Vagina (tissue), 2 donors: ENCODE measurements at regions of chr1 and their contacts with region 1.

Region 1: GRCh38 chr1:27402349-27402754 is 9.9 kb downstream of the GPR3 start:
- DNase-seq: no peak
- H3K4me3 ChIP-seq: no peak overlapping the region
- H3K27ac ChIP-seq: peak overlapping the region; percentile 87
- H3K4me1 ChIP-seq: peaks cover 81% of the 10 kb centered on the region
- H3K27me3 ChIP-seq: no peaks in the 10 kb centered on the region
- CTCF ChIP-seq: peak; percentile 38 to 63 (median 46)
- POLR2A ChIP-seq: no peak

Region 2: DNA sequence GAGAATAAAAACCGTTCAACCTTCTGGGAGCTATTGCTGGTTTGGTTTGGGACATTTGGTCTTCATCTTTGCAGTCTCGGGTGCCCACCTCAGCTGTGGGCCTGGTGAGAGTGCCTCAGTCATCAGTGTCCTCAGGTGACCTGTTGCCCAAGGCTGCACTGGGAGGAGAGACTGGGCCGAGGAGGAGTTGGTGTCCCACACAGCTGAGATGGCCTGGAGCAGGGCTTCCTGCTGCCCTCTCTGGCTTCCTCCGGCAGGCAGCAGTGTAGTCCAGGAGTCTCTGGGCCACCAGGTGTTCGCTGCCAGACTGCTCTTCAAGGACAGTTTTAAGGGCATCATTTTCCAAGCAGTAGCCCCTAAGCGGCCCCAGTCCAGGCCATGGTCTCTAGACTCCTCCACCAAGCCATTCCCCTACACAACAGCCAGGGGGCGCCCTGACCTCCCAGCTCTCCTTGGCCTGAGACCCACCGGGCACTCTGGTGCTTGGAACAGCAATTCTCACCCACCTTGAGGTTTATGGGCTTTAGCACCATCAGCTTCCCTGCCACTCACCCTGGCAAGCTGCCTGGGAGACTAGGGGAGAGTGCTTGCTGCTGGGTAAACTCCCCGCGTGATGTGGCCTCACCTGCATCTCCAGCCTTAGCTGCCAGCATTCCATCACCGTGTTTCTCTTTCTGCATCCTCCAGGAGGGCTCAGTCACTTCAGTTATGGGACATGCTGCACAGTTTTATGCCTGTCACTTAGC is 69.6 kb before region 1 on chr1:
- intact Hi-C with region 1: no loop called
- DNase-seq: no peak
- H3K4me3 ChIP-seq: no peak overlapping the region
- H3K27ac ChIP-seq: no peak overlapping the region
- H3K4me1 ChIP-seq: peaks cover 2% of the 10 kb centered on the region
- H3K27me3 ChIP-seq: no peaks in the 10 kb centered on the region
- CTCF ChIP-seq: peak; percentile 68 to 76 (median 73)
- POLR2A ChIP-seq: no peak

Region 3: GRCh38 chr1:27365372-27366112 is 36.8 kb before region 1 on chr1:
- intact Hi-C with region 1: no loop called
- DNase-seq: peak in 1 of 2 donors; percentile 97
- H3K4me3 ChIP-seq: peak overlapping the region; percentile 75 to 97
- H3K27ac ChIP-seq: peak overlapping the region; percentile 99
- H3K4me1 ChIP-seq: peaks cover 51% of the 10 kb centered on the region
- H3K27me3 ChIP-seq: no peaks in the 10 kb centered on the region
- CTCF ChIP-seq: no peak
- POLR2A ChIP-seq: peak in 1 of 2 donors; percentile 70

Region 4: DNA sequence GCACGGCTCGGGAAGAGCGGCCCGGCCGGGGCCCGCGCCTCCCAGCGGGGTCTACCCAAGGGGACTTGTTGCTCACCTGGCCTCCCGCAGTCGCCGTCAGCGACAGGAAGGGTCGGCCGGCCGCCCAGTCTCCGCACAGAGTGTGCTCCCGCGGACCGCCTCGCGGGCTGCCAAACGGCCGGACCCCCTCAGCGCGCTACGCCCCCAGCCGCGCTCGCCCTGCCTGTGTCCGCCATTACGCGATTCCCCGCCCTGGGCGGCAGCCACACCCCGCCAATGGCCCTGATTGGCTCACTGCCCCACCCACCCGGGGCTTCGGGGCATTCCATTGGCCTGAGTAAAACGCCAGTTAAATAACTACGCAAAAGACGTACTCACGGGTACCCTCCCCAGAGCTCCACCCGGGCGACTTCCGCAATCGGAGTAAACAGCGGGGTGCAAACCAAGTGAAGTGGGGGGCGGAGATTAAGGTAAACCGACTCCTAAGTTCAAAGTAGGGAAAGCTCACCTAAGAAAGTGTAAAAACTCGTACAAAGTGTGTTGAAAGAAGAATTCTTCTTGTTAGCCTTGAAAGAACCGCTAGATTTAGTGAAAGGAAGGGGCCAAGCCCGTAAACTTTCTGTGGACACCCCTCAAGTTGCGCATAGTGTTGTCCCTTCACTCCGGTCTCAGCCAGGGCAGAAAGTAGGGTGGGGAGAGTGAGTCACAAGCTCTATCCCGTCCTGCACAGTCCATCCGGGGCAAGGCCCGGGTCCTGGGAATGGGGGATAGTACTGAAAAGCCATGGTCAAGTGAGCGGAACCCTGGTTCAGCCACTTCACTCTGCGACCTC is 87.8 kb after region 1 on chr1 and contains the start of gene WASF2:
- intact Hi-C with region 1: loop called (anchors 5 kb)
- DNase-seq: peak in 1 of 2 donors; percentile 99
- H3K4me3 ChIP-seq: peak within 1 kb of the TSS; percentile 94 to 100
- H3K27ac ChIP-seq: peak within 1 kb of the TSS; percentile 100
- H3K4me1 ChIP-seq: peaks cover 47% of the 10 kb centered on the region
- H3K27me3 ChIP-seq: no peaks in the 10 kb centered on the region
- CTCF ChIP-seq: no peak
- POLR2A ChIP-seq: peak; percentile 55 to 97
- total RNA-seq, gene WASF2: 58.9 TPM

Region 5: GRCh38 chr1:27536767-27537166 is 134.4 kb after region 1 on chr1:
- intact Hi-C with region 1: no loop called
- DNase-seq: no peak
- H3K4me3 ChIP-seq: no peak overlapping the region
- H3K27ac ChIP-seq: peak overlapping the region; percentile 99
- H3K4me1 ChIP-seq: peaks cover 66% of the 10 kb centered on the region
- H3K27me3 ChIP-seq: no peaks in the 10 kb centered on the region
- CTCF ChIP-seq: no peak
- POLR2A ChIP-seq: no peak